ENCODE measurements at regions of chr9 and their contacts with region 1.

Region 1: DNA sequence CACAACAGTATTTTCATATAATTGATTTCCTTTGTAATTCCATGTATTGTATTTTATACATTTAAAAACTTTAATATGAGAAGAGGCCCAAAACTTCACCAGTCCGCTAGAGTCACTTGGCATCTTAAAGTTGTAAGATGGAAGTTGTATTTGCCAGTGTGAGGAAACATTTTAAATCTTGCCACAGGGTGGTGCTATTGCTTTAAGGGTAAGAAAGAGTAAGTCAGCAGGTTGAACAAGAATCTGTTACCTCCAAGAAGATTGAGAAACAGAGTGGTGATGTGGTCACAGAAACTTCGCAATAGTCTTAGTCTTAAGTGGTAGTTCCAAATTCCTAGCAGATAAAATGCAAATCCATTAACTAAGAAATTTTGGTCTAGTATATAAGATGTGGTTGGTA is 39.8 kb upstream of the RANBP6 start:
- DNase-seq: no peak
- ATAC-seq: peak; percentile 52

Region 2: DNA sequence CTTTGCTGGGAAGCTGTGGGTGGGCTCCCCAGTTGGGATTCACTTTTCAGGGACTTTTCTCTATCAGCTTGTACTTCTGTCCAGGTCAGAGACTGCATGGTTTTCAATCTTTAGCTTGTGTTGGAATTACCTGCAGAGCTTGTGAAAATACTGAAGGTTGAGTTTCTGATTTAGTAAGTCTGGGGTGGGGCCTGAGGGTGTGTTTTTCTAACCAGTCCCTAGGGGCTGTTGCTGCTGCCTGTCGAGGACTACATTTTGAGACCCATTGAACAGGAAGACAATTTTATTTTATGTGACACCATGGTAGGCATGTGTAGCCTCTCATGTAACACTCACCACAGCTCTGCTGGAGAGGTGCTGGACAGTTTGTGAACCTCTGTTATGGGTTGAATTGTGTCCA is 179.2 kb before region 1 on chr9:
- intact Hi-C with region 1: no loop called
- DNase-seq: no peak
- ATAC-seq: no peak

Region 3: DNA sequence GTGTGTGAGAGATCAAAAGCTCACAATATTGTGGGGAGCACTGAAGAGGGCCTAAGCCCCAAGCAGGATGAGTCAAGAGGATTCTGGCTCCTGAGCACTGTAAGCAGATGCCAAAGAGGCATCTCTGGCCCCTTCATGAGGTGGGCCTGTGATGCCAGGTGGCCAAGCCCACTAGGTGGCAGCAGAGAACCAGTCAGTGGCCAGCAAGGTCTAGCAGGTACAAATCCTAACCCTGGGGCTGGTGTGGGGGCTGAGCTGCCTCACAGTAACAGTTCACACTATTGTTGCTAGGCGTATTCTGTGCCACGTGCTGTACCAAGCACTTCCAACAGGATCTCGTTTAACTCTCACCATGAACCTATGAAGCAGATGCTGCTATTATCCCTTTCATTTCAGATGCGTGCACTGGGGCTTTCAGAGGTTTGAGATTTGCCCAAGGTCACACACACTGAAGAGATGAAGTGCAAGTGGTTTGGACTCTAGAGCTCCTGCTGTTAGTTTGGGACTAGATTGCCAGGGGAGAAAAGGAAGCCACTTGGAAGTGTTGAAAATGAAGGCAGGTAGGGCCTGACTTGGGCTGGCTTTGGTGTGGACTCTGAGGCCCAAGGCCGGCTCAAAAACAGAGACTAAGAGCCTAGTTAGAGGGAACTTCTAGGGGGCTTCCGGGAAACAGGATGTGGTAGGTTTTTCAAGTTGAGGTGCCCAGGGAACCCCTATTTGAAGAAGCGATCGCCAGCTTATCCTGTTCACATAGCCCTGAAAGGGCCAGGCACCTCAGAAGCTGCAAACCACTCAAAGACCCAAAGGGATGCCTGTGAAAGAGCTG is 168.9 kb before region 1 on chr9:
- intact Hi-C with region 1: loop called (anchors 2 kb)
- DNase-seq: peak; percentile 79
- ATAC-seq: peak; percentile 74

Region 4: GRCh38 chr9:6068983-6069382 is 13.8 kb after region 1 on chr9:
- intact Hi-C with region 1: no loop called
- DNase-seq: no peak
- ATAC-seq: no peak

Region 5: GRCh38 chr9:6106576-6107339 is 51.5 kb after region 1 on chr9:
- intact Hi-C with region 1: loop called (anchors 2 kb)
- DNase-seq: no peak
- ATAC-seq: peak; percentile 95

Region 6: DNA sequence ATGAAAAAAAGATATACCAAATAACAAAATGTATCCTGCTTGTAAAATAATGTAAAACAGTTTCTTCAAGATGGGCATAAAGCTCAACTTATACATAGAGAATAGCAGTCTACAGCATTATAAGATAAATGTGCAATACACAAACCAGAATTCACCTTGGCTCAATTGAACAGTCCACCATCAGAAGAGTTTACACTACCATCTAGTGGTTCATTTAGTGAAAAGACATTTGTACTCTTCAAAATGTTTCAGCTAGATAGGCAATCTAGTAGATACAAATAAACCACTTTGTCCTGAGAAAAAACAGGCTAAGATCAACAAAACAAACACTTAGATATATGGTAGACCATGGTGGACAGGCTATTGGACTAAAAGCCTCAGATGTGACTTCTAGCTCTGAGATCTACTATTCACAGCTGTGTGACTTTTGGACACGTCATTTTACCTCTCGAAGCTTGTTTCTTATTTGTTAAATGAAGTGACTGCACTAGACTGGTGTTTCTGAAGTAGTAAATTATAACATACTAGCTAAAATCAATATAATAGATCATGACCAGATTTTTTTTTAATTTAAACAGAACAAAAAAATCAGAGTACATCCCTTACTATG is 250.8 kb after region 1 on chr9:
- intact Hi-C with region 1: loop called (anchors 1 kb)
- DNase-seq: no peak
- ATAC-seq: no peak

Measured in Right ventricle myocardium inferior (tissue), 1 donor.